Mammary epithelial cell (primary cell): ENCODE measurements at regions of chr16 and their contacts with region 1.

Region 1: DNA sequence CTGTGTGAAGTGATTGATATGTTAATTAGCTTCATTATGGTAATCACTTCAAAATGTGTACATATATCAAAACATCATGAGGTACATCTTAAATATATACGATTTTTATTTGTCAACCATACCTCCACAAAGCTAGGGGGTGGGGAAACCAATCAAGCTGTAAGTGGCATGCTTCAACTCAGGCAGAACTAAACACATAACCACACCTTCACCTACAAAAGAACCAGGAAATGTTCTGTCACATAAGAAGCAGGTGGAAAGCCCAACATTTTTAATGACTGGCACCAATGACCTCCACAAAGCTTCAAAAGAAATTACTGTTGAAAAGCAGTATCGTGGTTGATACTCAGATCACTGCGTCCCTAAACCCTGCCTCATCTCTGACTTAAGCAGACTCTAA is 867.7 kb upstream of the EEF2KMT start:
- DNase-seq: no peak
- H3K4me3 ChIP-seq: no peak overlapping the region
- H3K27ac ChIP-seq: no peak overlapping the region
- H3K4me1 ChIP-seq: no peaks in the 10 kb centered on the region
- H3K27me3 ChIP-seq: no peaks in the 10 kb centered on the region
- CTCF ChIP-seq: no peak

Region 2: GRCh38 chr16:6009151-6009550 is 43.8 kb after region 1 on chr16:
- CTCF ChIA-PET with region 1: no interaction called
- dilution Hi-C with region 1: loop called (anchors 5 kb)
- in situ Hi-C with region 1: no loop called
- intact Hi-C with region 1: no loop called
- DNase-seq: no peak
- H3K4me3 ChIP-seq: no peak overlapping the region
- H3K27ac ChIP-seq: no peak overlapping the region
- H3K4me1 ChIP-seq: no peaks in the 10 kb centered on the region
- H3K27me3 ChIP-seq: no peaks in the 10 kb centered on the region
- CTCF ChIP-seq: no peak